ENCODE measurements at regions of chr6 and their contacts with region 1.

Region 1: DNA sequence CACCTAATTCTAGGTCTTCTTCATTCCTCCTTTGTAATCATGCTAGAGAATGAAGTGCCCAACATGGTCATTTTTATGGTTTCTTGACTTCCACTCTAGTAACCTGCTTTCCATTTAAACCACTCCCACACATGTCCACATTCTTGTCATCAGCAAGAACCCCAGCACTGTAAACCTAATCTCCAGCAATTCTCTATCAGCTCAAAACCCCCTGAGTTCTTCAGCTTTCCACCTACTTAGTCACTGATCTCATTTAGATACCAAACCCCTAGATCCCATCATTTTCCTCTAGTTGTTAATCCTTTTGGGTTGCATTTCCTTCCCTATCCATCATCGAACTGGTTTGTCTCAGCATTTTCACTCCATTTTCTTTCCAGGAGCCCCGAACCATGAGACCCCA is 49.7 kb downstream of the GOPC start:
- DNase-seq: no peak
- H3K4me3 ChIP-seq: no peak overlapping the region
- H3K27ac ChIP-seq: no peak overlapping the region
- H3K4me1 ChIP-seq: peaks cover 12% of the 10 kb centered on the region
- H3K27me3 ChIP-seq: no peaks in the 10 kb centered on the region
- CTCF ChIP-seq: no peak
- POLR2A ChIP-seq: no peak

Region 2: DNA sequence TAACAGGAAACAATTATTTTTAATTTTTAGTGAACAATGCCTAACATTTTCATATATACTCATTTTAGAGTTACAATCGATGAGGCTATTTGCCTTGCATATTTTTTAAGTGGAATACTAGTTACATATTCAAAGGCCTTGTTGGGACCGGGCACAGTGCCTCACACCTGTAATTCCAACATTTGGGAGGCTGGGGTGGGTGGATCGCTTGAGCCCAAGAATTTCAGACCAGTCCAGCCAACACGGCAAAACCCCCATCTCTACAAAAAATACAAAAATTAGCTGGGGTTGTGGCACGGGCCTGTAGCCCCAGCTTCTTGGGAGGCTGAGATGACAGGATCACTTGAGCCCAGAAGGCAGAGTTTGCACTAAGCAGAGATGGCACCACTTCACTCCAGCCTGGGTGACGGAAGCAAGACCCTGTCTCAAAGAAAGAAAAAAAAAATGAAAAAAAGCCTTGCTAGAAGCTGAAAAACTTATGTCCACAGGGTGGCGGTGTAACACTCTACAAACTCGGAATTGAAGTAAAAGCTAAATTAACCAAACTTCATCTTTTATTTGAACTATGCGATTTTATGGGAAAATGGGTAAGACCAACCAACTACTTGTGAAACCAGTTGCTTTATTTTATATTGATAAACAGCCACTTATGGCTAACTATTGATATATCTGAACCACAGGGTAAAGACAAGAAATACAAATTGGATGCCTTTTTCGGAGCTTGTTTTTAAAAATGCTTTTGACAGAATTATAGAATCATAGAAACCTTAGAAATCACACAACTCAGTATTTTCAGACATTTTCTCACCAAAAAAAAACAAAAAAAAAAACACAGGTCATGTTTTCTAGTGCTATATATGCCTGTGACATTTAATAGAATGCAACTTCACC is 102.8 kb before region 1 on chr6:
- intact Hi-C with region 1: loop called (anchors 1 kb)
- DNase-seq: no peak
- H3K4me3 ChIP-seq: no peak overlapping the region
- H3K27ac ChIP-seq: peak overlapping the region; percentile 57
- H3K4me1 ChIP-seq: peaks cover 8% of the 10 kb centered on the region
- H3K27me3 ChIP-seq: no peaks in the 10 kb centered on the region
- CTCF ChIP-seq: peak; percentile 34 to 76 (median 69)
- POLR2A ChIP-seq: no peak

Measured in vagina (tissue), 2 donors.